Calu3 (cell line): ENCODE measurements at regions of chr19 and their contacts with region 1.

Region 1: DNA sequence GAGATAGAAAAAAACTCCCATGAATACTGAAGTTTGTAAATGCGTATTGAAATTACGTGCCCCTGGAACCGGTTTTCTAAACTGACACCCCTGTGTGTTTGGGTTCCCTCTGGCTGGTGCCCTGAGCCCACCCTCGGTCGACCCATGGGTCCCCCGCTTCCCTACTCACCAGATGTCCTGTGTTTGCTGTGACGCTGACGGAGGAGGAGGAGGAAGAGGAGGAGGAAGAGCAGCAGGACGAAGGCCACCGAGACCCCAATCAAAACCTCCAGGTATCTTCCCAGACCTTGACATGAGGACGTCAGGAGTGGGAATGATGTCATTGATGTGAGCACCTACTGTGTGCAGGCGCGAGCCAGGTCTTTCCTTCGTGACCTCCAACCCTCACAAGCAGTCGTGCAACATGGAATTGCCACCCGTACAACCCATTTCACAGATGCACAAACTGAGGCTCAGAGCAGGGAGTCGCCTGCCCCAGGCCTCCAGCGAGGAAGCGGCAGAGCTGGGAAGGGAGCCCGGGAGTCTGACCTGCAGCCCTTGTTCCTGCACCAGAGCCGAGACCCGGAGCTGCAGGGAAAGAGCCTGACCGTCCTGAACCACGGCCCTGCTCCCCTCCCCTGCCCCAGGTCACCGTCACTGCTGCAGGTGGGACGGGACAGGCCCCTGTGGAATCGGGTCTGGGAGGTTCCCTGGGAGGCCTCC is 3.7 kb downstream of the LILRB3 start:
- DNase-seq: no peak
- H3K4me3 Mint-ChIP-seq: no peak overlapping the region
- H3K27ac Mint-ChIP-seq: no peak overlapping the region
- H3K4me1 Mint-ChIP-seq: no peaks in the 10 kb centered on the region
- H3K27me3 Mint-ChIP-seq: peaks cover 55% of the 10 kb centered on the region
- CTCF ChIP-seq: no peak

Region 2: DNA sequence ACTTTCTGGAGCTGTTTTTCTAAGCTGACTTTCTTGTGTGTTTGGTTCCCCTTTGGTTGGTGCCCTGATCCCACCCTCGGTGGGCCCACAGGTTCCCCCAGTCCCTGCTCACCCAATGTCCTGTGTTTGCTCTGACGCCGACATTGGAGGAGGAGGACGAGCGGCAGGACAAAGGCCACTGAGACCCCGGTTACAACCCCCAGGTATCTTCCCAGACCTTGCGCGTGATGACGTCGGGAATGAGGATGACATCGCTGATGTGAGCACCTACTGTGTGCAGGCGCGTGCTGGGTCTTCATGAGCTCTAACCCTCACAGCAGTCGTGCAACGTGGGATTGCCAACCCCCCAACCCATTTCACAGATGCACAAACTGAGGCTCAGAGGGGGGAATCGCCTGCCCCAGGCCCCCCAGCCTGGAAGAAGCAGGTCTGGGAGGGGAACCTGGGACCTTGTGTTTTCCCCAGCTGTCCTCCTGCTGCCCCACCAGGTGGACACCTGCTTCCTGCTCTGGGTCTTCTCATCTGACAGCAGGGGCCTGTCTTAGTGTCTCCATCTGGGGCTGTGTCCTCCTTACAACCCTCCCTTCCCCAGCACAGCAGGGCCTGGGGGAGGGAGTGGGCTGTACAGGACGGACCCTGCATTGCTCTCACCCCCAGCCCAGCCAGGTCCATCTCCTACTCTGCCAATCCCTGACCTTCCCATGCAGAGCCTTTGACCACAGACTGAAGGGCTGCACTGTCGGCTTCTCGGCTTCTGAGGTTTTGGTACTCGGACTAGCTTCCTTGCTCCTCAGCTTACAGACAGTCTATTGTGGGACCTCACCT is 28.2 kb after region 1 on chr19:
- CTCF ChIA-PET with region 1: interaction called, 3 read pairs
- intact Hi-C with region 1: loop called (anchors 2 kb)
- DNase-seq: no peak
- H3K4me3 Mint-ChIP-seq: peak overlapping the region; percentile 17
- H3K27ac Mint-ChIP-seq: no peak overlapping the region
- H3K4me1 Mint-ChIP-seq: peaks cover 9% of the 10 kb centered on the region
- H3K27me3 Mint-ChIP-seq: peaks cover 73% of the 10 kb centered on the region
- CTCF ChIP-seq: no peak